Dorsolateral prefrontal cortex (tissue), 120 donors: ENCODE measurements at regions of chr1 and their contacts with region 1.

Region 1: DNA sequence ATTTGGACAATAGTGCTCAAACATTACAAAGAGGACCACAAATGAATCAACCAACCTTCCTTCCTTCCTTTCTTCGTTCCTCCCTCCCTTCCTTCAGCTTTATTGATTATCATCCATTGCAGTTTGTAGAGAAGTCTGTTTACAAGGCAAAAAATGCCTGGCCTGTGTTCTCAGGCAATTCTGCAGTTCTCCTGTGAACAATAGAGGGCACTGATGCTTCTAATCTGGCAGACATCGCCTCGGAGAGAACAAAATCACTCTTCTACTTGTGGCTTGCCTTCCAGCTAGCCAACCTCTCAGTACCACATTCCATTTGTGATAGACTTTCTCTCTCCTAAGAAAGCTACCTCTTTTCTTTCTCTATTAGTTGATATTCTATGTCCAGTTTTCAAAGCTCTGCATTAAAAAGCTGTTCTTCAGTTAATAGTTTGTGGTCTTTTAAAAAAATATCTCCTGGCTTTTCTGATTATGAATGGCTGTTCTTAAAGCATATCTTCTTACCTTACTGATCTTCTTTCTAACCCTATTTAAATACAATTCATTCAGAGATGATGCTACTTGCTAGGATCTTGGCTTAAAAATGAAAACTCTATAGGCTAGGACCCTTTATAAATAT is 26.9 kb upstream of the ESRRG start:
- DNase-seq: peak in 7 of 10 donors; percentile 16 to 74 (median 40)
- H3K4me3 ChIP-seq: peak overlapping the region in 1 of 59 donors; percentile 15
- H3K27ac ChIP-seq: peak overlapping the region in 27 of 59 donors; percentile 2 to 65 (median 33)
- H3K27me3 ChIP-seq: no peaks in the 10 kb centered on the region
- CTCF ChIP-seq: peak; percentile 46 to 88 (median 76)

Region 2: GRCh38 chr1:216702170-216702569 is 48.0 kb before region 1 on chr1:
- intact Hi-C with region 1: no loop called
- DNase-seq: no peak
- H3K4me3 ChIP-seq: no peak overlapping the region
- H3K27ac ChIP-seq: no peak overlapping the region
- H3K27me3 ChIP-seq: no peaks in the 10 kb centered on the region
- CTCF ChIP-seq: no peak

Region 3: GRCh38 chr1:216902669-216903381 is 152.7 kb after region 1 on chr1:
- intact Hi-C with region 1: loop called in 1 of 2 experiments (anchors 5 kb)
- DNase-seq: peak in 3 of 10 donors; percentile 24 to 51 (median 35)
- H3K4me3 ChIP-seq: no peak overlapping the region
- H3K27ac ChIP-seq: peak overlapping the region in 3 of 59 donors; percentile 10 to 47 (median 11)
- H3K27me3 ChIP-seq: peaks cover 0 to 5% (median 0%) of the 10 kb centered on the region in 45 donors
- CTCF ChIP-seq: no peak

Region 4: GRCh38 chr1:217333939-217334338 is 583.8 kb after region 1 on chr1:
- intact Hi-C with region 1: loop called in 1 of 2 experiments (anchors 5 kb)
- DNase-seq: peak in 1 of 10 donors; percentile 34
- H3K4me3 ChIP-seq: no peak overlapping the region
- H3K27ac ChIP-seq: no peak overlapping the region
- H3K27me3 ChIP-seq: peaks cover 0 to 2% (median 0%) of the 10 kb centered on the region in 45 donors
- CTCF ChIP-seq: peak in 55 of 56 donors; percentile 23 to 73 (median 57)